ENCODE measurements at regions of chr2 and their contacts with region 1.

Region 1: DNA sequence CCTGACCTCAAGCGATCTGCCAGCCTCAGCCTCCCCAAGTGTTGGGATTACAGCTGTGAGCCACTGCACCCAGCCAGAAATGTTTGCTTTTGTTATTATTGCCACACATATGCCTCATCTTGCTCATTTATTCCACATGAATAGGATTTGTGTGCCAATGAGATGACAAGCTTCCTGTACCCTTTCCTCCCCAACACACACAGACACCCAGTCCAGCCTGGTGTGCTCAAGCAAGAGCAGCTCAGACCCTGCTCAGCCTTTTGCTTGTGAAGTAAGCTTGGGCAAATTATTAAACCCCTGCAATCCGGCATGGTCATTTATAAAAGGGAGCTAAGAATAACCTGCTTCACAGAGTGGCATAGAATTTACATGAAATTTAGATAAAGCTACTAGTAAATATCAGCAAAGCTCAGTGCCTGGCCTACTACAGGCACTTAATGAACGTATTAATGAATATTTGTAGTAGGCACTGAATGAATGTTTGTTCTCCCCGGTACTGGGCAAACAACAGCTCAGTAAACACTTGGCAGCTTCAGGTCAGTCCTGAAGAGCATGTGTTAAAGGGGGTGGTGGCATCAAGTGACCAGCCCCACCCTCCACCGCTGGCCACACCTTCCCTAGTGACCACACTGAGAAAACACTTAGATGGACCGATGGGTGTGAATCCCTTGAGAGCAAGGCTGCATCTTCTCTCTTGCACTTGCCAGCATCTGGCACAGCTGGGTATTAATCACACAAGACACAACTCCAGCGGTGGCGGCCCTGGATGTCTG is 280.2 kb downstream of the SRBD1 start:
- DNase-seq: peak; percentile 34
- H3K4me3 Mint-ChIP-seq: no peak overlapping the region
- H3K27ac Mint-ChIP-seq: no peak overlapping the region
- H3K4me1 Mint-ChIP-seq: peaks cover 37% of the 10 kb centered on the region
- H3K27me3 Mint-ChIP-seq: no peaks in the 10 kb centered on the region
- CTCF ChIP-seq: no peak

Region 2: GRCh38 chr2:45275242-45275805 is 55.5 kb before region 1 on chr2:
- CTCF ChIA-PET with region 1: interaction called, 4 read pairs
- intact Hi-C with region 1: loop called (anchors 2 kb)
- DNase-seq: peak; percentile 47
- H3K4me3 Mint-ChIP-seq: no peak overlapping the region
- H3K27ac Mint-ChIP-seq: peak overlapping the region; percentile 30
- H3K4me1 Mint-ChIP-seq: peaks cover 49% of the 10 kb centered on the region
- H3K27me3 Mint-ChIP-seq: no peaks in the 10 kb centered on the region
- CTCF ChIP-seq: no peak

Region 3: DNA sequence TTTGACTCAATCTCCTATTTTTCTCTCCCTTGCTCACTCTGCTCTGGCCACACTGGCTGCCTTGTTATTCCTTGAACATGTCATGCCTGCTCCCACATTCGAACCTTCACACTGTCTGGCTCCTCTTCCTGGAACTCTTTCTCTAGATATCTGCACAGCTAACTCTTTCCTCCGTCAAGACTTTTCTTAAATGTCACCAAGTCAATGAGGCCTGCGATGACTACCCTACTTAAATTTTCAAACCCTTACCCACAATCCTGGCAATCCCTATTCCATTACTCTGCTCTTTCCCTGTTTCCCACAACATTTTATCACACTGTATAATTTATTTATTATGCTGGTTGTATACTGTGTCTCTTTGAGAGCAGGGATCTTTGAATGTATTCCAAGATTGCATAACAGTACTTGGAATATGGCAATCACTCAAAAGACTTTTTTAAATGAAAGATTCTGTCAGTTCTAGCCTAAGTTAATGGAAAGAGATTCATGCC is 74.0 kb after region 1 on chr2:
- CTCF ChIA-PET with region 1: no interaction called
- intact Hi-C with region 1: no loop called
- DNase-seq: no peak
- H3K4me3 Mint-ChIP-seq: no peak overlapping the region
- H3K27ac Mint-ChIP-seq: no peak overlapping the region
- H3K4me1 Mint-ChIP-seq: no peaks in the 10 kb centered on the region
- H3K27me3 Mint-ChIP-seq: no peaks in the 10 kb centered on the region
- CTCF ChIP-seq: no peak

Measured in Calu3 (cell line).